ENCODE measurements at regions of chr20 and their contacts with region 1.

Region 1: DNA sequence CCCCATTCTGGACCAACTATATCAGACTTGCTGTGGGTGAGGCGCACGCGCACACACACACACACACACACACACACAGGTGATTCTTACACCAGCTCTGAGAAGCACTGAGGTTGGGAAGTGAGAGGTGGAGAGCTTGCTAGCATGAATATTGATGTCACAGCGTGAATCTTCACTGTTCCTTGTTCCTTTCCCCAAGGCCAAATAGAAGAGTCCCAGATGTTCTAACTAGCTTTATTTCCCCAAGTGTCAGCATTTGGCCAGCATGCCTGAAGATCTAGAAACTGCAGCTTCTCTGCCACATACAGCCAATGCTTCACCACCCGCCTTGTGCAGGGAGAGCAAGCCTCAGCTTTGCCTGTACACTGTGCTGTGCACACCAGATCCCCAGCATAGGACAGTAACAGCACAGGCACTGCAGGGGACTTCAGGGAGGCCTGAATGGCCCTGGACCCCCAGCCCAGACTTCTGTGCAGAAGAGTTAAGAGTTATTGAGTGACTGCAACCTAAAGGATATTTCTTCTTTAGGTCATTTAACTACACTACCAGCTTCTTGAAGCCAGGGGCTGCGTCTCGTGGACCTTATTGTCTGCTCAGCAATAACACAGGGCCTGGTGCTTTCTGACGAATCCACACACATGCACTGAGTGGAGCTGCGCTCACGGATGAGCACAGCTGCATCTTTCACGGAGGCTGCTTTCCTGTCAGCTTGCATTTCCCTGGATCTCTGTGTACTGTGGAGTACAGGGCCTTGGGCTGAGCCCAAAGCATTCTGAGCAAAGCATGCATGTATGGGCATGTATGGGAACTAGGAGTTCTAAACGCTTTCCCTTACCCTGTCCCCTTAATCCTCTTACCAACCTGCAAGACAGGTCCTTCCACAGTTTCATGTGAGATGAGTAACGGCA is 13.9 kb upstream of the CD93 start:
- DNase-seq: no peak
- H3K4me3 ChIP-seq: no peak overlapping the region
- H3K27ac ChIP-seq: peak overlapping the region; percentile 80 to 87 (median 82)
- H3K4me1 ChIP-seq: peaks cover 34 to 99% (median 72%) of the 10 kb centered on the region in 3 donors
- H3K27me3 ChIP-seq: no peaks in the 10 kb centered on the region
- CTCF ChIP-seq: peak in 2 of 6 experiments; percentile 26 to 37
- POLR2A ChIP-seq: peak in 1 of 4 donors; percentile 22

Region 2: DNA sequence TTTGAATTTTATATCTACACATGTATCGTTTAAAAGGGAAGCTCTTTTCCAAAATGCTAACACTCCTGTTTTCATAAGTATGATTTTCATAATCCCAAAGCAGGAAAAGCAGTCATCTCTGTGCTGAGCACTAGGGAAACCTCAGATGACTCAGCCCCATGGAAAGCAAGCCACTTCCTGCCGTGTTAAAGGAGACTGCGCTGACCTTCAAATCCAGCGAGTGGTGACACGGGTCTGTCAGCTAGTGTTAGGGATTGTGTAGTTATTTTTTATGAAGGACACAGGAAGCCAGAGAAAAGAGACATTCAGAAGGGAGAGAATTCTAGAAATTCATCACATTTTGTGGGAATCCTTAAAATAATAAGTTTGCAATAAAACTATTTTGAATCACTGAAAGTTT is 43.1 kb after region 1 on chr20:
- intact Hi-C with region 1: loop called (anchors 5 kb)
- DNase-seq: no peak
- H3K4me3 ChIP-seq: no peak overlapping the region
- H3K27ac ChIP-seq: peak overlapping the region; percentile 84 to 90 (median 88)
- H3K4me1 ChIP-seq: peaks cover 20 to 82% (median 61%) of the 10 kb centered on the region in 3 donors
- H3K27me3 ChIP-seq: no peaks in the 10 kb centered on the region
- CTCF ChIP-seq: peak in 1 of 6 experiments; percentile 7
- POLR2A ChIP-seq: no peak